Sigmoid colon (tissue), 7 donors: ENCODE measurements at regions of chr13 and their contacts with region 1.

Region 1: DNA sequence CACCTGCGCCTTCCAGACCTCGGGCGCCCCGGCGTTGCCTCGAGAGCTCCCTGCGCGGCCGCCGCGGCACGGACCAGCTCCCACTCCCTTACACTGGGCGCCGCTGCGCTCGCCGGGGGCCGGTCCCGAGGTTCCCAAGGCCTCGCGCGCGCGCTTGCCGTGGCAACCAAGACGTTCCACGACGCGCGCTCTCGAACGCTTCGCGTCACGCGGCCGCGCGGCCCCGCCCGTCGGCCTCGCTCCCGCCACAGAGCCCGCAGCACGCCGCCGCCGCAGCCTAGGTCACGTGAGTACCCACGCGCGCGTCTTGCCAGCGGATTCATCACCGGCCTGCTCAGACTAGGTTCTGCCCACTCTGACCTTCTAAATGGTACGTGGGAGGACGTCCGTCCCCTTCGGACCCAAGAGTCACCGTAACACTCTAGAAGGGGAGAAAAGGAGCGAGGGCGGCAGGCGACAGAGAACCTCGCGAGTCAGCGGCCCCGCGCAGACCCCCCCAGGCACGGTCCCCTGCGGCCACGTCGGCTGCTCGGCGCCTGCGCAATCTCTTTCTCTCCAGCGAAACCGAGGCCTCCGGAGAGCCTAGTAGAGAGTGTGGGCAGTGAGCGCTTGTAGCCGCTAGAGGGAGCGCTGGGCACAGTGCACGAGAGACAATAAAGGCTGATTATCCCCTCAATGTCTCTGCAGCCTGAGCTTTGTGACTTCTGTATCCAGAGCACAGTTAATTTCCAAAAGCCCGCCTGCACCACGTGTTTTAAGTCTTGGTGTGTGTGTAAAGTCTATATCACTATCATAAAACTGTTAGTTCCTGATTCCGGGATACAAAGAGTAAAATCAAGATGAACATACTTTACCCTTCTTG is at the start of gene SPART:
- DNase-seq: peak; percentile 97
- H3K4me3 ChIP-seq: peak within 1 kb of the TSS; percentile 70 to 92 (median 86)
- H3K27ac ChIP-seq: peak within 1 kb of the TSS; percentile 93 to 100 (median 99)
- H3K4me1 ChIP-seq: peaks cover 0 to 44% (median 32%) of the 10 kb centered on the region in 4 donors
- H3K27me3 ChIP-seq: no peaks in the 10 kb centered on the region
- CTCF ChIP-seq: peak; percentile 92 to 95 (median 94)
- EP300 ChIP-seq: no peak
- POLR2A ChIP-seq: peak in 1 of 2 donors; percentile 22
- total RNA-seq, gene SPART: 83.2 to 99.9 (median 90.9) TPM

Region 2: GRCh38 chr13:35978603-35979316 is 367.7 kb before region 1 on chr13:
- intact Hi-C with region 1: loop called (anchors 2 kb)
- DNase-seq: no peak
- H3K4me3 ChIP-seq: no peak overlapping the region
- H3K27ac ChIP-seq: peak overlapping the region; percentile 60 to 72 (median 68)
- H3K4me1 ChIP-seq: peaks cover 0 to 13% (median 8%) of the 10 kb centered on the region in 4 donors
- H3K27me3 ChIP-seq: no peaks in the 10 kb centered on the region
- CTCF ChIP-seq: peak; percentile 39 to 90 (median 82)
- EP300 ChIP-seq: no peak
- POLR2A ChIP-seq: no peak

Region 3: DNA sequence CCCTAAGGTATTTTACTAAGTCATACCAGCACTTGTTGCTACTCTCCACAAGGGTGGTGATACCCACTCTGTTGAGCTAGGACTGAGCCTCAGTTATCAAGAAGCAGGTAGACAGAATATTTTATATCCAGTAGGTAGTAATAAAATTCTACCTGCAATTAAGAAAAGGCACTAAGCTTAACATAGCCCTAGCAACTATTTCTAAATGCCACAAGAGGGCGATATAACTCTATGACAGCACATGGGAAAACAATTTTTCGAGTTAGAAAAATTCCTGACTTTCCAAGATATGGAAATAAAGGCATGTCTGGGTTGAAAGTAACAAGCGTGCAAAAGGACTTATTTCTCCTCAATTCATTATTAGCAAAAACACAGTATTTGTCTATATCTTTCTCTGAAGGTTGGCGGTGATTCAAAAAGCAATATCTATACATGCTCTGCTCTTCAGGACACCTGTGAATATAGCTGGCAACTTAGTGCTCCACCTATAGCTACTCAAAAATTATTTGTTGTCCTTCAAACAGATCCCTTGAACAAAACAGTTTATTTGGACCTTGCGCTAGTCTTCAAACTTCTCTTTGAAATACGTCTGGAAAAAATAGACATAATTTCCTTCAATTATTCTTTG is 63.5 kb before region 1 on chr13:
- intact Hi-C with region 1: loop called (anchors 2 kb)
- DNase-seq: no peak
- H3K4me3 ChIP-seq: no peak overlapping the region
- H3K27ac ChIP-seq: no peak overlapping the region
- H3K4me1 ChIP-seq: peaks cover 0 to 22% (median 14%) of the 10 kb centered on the region in 4 donors
- H3K27me3 ChIP-seq: no peaks in the 10 kb centered on the region
- CTCF ChIP-seq: peak; percentile 60 to 86 (median 70)
- EP300 ChIP-seq: no peak
- POLR2A ChIP-seq: no peak

Region 4: GRCh38 chr13:36297366-36298338 is 48.8 kb before region 1 on chr13 and contains the start of gene CCDC169:
- intact Hi-C with region 1: loop called (anchors 2 kb)
- DNase-seq: peak; percentile 93
- H3K4me3 ChIP-seq: peak within 1 kb of the TSS; percentile 55 to 75 (median 64)
- H3K27ac ChIP-seq: peak within 1 kb of the TSS; percentile 78 to 93 (median 87)
- H3K4me1 ChIP-seq: peaks cover 0 to 15% (median 2%) of the 10 kb centered on the region in 4 donors
- H3K27me3 ChIP-seq: no peaks in the 10 kb centered on the region
- CTCF ChIP-seq: no peak
- EP300 ChIP-seq: peak in 2 of 4 donors; percentile 45 to 49
- POLR2A ChIP-seq: peak; percentile 53 to 60
- total RNA-seq, gene CCDC169: 3.0 to 12.5 (median 3.1) TPM

Region 5: DNA sequence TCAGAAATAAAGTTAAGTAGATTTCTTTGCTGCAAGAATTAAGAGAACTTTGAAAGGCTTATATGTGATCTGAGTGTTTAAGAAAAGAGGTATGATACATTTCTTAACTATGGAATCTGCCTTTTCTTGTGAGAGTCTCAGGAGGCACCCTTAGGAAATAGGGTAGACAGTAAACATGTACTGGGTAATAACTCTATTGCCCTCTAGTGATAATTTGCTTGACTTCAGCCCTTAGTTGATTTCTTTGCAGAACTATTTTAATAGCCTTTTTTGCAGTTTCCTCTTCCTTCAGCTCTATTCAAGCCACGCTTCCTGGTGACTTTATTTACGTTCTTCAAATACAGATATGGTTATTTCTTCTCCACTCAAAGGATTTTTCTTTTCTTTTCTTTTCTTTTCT is 48.8 kb after region 1 on chr13:
- intact Hi-C with region 1: loop called (anchors 5 kb)
- DNase-seq: no peak
- H3K4me3 ChIP-seq: no peak overlapping the region
- H3K27ac ChIP-seq: no peak overlapping the region
- H3K4me1 ChIP-seq: no peaks in the 10 kb centered on the region
- H3K27me3 ChIP-seq: no peaks in the 10 kb centered on the region
- CTCF ChIP-seq: peak in 2 of 4 experiments; percentile 24 to 47
- EP300 ChIP-seq: no peak
- POLR2A ChIP-seq: no peak

Region 6: DNA sequence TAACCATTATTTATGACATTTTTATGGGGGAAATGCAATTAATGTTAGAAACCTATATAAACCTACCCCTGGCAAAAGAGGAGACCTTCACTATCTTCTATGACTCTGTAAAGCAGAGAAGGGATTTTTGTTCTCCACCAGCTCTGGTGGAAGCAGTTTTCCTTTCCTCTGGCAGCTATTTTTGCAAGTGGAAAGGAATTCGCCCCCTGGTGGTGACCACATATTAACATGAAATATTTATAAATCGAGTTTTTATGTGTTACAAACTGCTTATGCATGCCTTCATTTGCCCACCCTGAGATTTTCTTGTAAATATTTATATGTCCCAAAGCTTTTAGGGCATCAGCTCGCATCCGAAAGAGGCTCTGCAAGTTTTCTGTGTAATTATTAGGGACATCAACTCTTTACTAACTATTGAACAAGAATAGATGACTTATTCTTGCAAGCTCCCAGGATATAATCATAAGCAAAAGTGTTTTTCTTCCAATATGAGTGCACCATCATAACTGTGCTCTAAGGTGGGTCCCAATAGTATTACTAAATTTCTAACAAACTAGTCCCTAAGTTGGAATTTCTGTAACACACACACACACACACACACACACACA is 389.8 kb after region 1 on chr13:
- intact Hi-C with region 1: loop called (anchors 5 kb)
- DNase-seq: peak; percentile 69
- H3K4me3 ChIP-seq: no peak overlapping the region
- H3K27ac ChIP-seq: no peak overlapping the region
- H3K4me1 ChIP-seq: no peaks in the 10 kb centered on the region
- H3K27me3 ChIP-seq: no peaks in the 10 kb centered on the region
- CTCF ChIP-seq: peak; percentile 32 to 69 (median 59)
- EP300 ChIP-seq: no peak
- POLR2A ChIP-seq: no peak

Region 7: DNA sequence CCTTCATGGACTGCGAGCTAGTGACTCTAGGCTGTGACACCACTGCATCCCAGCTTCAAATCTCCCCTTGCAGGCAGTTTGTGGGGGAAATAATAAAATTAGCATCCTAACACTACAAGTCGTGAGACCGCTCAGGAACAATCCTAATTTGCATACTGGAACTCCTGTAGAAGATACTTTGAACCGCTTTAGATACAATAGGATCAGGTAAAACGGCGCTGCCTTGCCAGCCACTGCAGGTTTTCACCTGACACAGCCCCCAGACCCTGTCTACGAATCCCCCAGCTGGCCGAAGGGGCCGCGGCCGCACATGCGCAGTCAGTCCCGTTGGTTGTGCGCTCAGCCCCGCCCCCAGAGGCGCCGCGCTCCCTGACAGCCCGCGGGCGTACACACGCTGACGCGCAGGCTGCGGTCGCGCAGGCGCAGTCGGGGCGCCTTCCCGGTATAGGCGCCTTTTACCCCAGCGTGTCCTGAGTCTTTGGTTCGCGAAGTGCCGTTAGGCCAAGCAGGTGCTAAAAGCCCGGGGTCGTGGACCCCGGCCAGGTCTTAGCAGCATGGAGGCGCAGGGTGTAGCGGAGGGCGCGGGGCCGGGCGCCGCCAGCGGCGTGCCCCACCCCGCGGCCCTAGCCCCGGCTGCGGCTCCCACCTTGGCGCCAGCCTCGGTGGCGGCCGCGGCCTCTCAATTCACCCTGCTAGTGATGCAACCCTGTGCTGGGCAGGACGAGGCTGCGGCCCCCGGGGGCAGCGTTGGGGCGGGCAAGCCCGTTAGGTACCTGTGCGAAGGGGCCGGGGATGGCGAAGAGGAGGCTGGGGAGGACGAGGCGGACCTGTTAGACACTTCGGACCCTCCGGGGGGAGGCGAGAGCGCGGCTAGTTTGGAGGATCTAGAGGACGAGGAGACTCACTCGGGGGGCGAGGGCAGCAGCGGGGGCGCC is 472.6 kb after region 1 on chr13 and contains the start of gene RFXAP:
- intact Hi-C with region 1: loop called (anchors 5 kb)
- DNase-seq: peak; percentile 94
- H3K4me3 ChIP-seq: peak within 1 kb of the TSS; percentile 78 to 91 (median 86)
- H3K27ac ChIP-seq: peak within 1 kb of the TSS; percentile 70 to 83 (median 81)
- H3K4me1 ChIP-seq: peaks cover 0 to 35% (median 24%) of the 10 kb centered on the region in 4 donors
- H3K27me3 ChIP-seq: no peaks in the 10 kb centered on the region
- CTCF ChIP-seq: no peak
- EP300 ChIP-seq: no peak
- POLR2A ChIP-seq: peak in 1 of 2 donors; percentile 36
- total RNA-seq, gene RFXAP: 5.4 to 8.3 (median 7.9) TPM